CD4-positive, alpha-beta T cell (primary cell): ENCODE measurements at regions of chr11 and their contacts with region 1.

Region 1: GRCh38 chr11:959608-960007 is 33.9 kb downstream of the AP2A2 start:
- DNase-seq: no peak
- ATAC-seq: no peak
- H3K4me3 ChIP-seq: no peak overlapping the region
- H3K4me3 Mint-ChIP-seq: no peak overlapping the region
- H3K27ac ChIP-seq: no peak overlapping the region
- H3K27ac Mint-ChIP-seq: no peak overlapping the region
- H3K4me1 ChIP-seq: peaks cover 5% of the 10 kb centered on the region
- H3K4me1 Mint-ChIP-seq: peaks cover 13% of the 10 kb centered on the region
- H3K27me3 ChIP-seq: no peaks in the 10 kb centered on the region
- H3K27me3 Mint-ChIP-seq: no peaks in the 10 kb centered on the region
- CTCF ChIP-seq: no peak

Region 2: GRCh38 chr11:777288-778255 is 182.0 kb before region 1 on chr11 and contains the start of gene GATD1:
- CTCF ChIA-PET with region 1: no interaction called
- POLR2A ChIA-PET with region 1: no interaction called
- intact Hi-C with region 1: no loop called
- DNase-seq: peak; percentile 85 to 96 (median 93)
- ATAC-seq: peak; percentile 87
- H3K4me3 ChIP-seq: peak within 1 kb of the TSS; percentile 67
- H3K4me3 Mint-ChIP-seq: peak within 1 kb of the TSS; percentile 90
- H3K27ac ChIP-seq: peak within 1 kb of the TSS in 1 of 2 donors; percentile 56
- H3K27ac Mint-ChIP-seq: peak within 1 kb of the TSS; percentile 77
- H3K4me1 ChIP-seq: peaks cover 48% of the 10 kb centered on the region
- H3K4me1 Mint-ChIP-seq: peaks cover 11% of the 10 kb centered on the region
- H3K27me3 ChIP-seq: no peaks in the 10 kb centered on the region
- H3K27me3 Mint-ChIP-seq: no peaks in the 10 kb centered on the region
- CTCF ChIP-seq: no peak
- total RNA-seq, gene GATD1: 14.7 to 16.1 TPM

Region 3: GRCh38 chr11:898143-898511 is 61.5 kb before region 1 on chr11:
- CTCF ChIA-PET with region 1: no interaction called
- POLR2A ChIA-PET with region 1: no interaction called
- intact Hi-C with region 1: no loop called
- DNase-seq: no peak
- ATAC-seq: no peak
- H3K4me3 ChIP-seq: no peak overlapping the region
- H3K4me3 Mint-ChIP-seq: no peak overlapping the region
- H3K27ac ChIP-seq: no peak overlapping the region
- H3K27ac Mint-ChIP-seq: no peak overlapping the region
- H3K4me1 ChIP-seq: no peaks in the 10 kb centered on the region
- H3K4me1 Mint-ChIP-seq: no peaks in the 10 kb centered on the region
- H3K27me3 ChIP-seq: no peaks in the 10 kb centered on the region
- H3K27me3 Mint-ChIP-seq: no peaks in the 10 kb centered on the region
- CTCF ChIP-seq: no peak

Region 4: GRCh38 chr11:977830-978720 is 18.5 kb after region 1 on chr11:
- CTCF ChIA-PET with region 1: no interaction called
- POLR2A ChIA-PET with region 1: no interaction called
- intact Hi-C with region 1: loop called in 1 of 2 experiments (anchors 2 kb)
- DNase-seq: no peak
- ATAC-seq: no peak
- H3K4me3 ChIP-seq: no peak overlapping the region
- H3K4me3 Mint-ChIP-seq: no peak overlapping the region
- H3K27ac ChIP-seq: no peak overlapping the region
- H3K27ac Mint-ChIP-seq: no peak overlapping the region
- H3K4me1 ChIP-seq: no peaks in the 10 kb centered on the region
- H3K4me1 Mint-ChIP-seq: peaks cover 11% of the 10 kb centered on the region
- H3K27me3 ChIP-seq: no peaks in the 10 kb centered on the region
- H3K27me3 Mint-ChIP-seq: no peaks in the 10 kb centered on the region
- CTCF ChIP-seq: no peak

Region 5: GRCh38 chr11:1447845-1448825 is 488.5 kb after region 1 on chr11:
- CTCF ChIA-PET with region 1: no interaction called
- POLR2A ChIA-PET with region 1: no interaction called
- intact Hi-C with region 1: no loop called
- DNase-seq: no peak
- ATAC-seq: no peak
- H3K4me3 ChIP-seq: no peak overlapping the region
- H3K4me3 Mint-ChIP-seq: no peak overlapping the region
- H3K27ac ChIP-seq: no peak overlapping the region
- H3K27ac Mint-ChIP-seq: no peak overlapping the region
- H3K4me1 ChIP-seq: peaks cover 2% of the 10 kb centered on the region
- H3K4me1 Mint-ChIP-seq: no peaks in the 10 kb centered on the region
- H3K27me3 ChIP-seq: no peaks in the 10 kb centered on the region
- H3K27me3 Mint-ChIP-seq: no peaks in the 10 kb centered on the region
- CTCF ChIP-seq: no peak